Activated CD4-positive, alpha-beta memory T cell treated with anti-CD3 and anti-CD28 coated beads for 36 hours (primary cell): ENCODE measurements at regions of chr9 and their contacts with region 1.

Region 1: GRCh38 chr9:73149371-73150067 is 2.1 kb upstream of the ANXA1 start:
- DNase-seq: no peak
- H3K4me3 Mint-ChIP-seq: peak overlapping the region; percentile 55
- H3K27ac Mint-ChIP-seq: peak overlapping the region; percentile 86
- H3K4me1 Mint-ChIP-seq: peaks cover 66% of the 10 kb centered on the region
- H3K27me3 Mint-ChIP-seq: no peaks in the 10 kb centered on the region

Region 2: DNA sequence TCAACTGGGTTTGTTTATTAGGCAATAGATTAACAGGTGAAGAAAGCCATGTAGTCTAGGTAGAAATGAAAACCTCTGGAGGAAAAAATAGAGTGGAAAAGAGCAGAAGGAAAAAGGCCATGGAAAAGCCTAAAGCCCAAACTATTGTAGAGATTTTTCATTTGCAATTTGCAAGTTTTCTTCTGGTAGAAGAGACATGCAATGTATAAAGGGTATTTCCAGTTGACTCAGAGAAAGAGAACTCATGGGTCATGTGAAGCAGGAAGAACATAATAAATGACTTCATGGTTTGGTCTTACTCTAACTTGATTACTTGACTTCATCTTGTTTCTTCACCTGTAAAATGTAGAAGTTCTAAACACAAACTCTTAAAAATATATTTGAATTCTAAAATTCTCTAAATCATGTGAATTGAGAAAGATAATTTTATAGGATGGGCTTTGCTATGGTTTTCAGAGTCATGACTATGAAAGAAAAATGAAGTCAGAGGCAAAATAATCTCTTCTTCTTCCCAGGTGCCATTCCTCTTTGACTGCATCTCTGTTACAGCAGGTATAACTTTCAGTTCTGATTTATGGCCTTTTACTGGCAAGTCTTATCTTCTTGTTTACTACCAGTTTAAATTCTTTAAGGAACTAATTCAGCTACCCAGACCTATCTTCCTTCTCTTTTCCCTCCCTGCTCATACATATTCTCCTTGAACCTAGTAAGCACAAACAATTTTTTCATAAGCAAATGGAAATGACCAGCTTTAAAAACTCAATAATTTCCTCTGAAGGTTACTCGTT is 675.9 kb before region 1 on chr9:
- CTCF ChIA-PET with region 1: no interaction called
- POLR2A ChIA-PET with region 1: no interaction called
- intact Hi-C with region 1: loop called (anchors 10 kb)
- DNase-seq: no peak
- H3K4me3 Mint-ChIP-seq: no peak overlapping the region
- H3K27ac Mint-ChIP-seq: peak overlapping the region; percentile 79
- H3K4me1 Mint-ChIP-seq: peaks cover 41% of the 10 kb centered on the region
- H3K27me3 Mint-ChIP-seq: no peaks in the 10 kb centered on the region

Region 3: GRCh38 chr9:72586388-72587130 is 563.0 kb before region 1 on chr9:
- CTCF ChIA-PET with region 1: no interaction called
- POLR2A ChIA-PET with region 1: no interaction called
- intact Hi-C with region 1: loop called (anchors 10 kb)
- DNase-seq: peak; percentile 44
- H3K4me3 Mint-ChIP-seq: no peak overlapping the region
- H3K27ac Mint-ChIP-seq: peak overlapping the region; percentile 50
- H3K4me1 Mint-ChIP-seq: peaks cover 47% of the 10 kb centered on the region
- H3K27me3 Mint-ChIP-seq: no peaks in the 10 kb centered on the region

Region 4: GRCh38 chr9:72871685-72872084 is 277.8 kb before region 1 on chr9:
- CTCF ChIA-PET with region 1: no interaction called
- POLR2A ChIA-PET with region 1: no interaction called
- intact Hi-C with region 1: no loop called
- DNase-seq: no peak
- H3K4me3 Mint-ChIP-seq: no peak overlapping the region
- H3K27ac Mint-ChIP-seq: no peak overlapping the region
- H3K4me1 Mint-ChIP-seq: no peaks in the 10 kb centered on the region
- H3K27me3 Mint-ChIP-seq: peaks cover 6% of the 10 kb centered on the region

Region 5: GRCh38 chr9:73116031-73116430 is 33.5 kb before region 1 on chr9:
- CTCF ChIA-PET with region 1: interaction called, 3 read pairs
- POLR2A ChIA-PET with region 1: interaction called, 7 read pairs
- intact Hi-C with region 1: loop called (anchors 1 kb)
- DNase-seq: no peak
- H3K4me3 Mint-ChIP-seq: no peak overlapping the region
- H3K27ac Mint-ChIP-seq: no peak overlapping the region
- H3K4me1 Mint-ChIP-seq: peaks cover 42% of the 10 kb centered on the region
- H3K27me3 Mint-ChIP-seq: no peaks in the 10 kb centered on the region

Region 6: DNA sequence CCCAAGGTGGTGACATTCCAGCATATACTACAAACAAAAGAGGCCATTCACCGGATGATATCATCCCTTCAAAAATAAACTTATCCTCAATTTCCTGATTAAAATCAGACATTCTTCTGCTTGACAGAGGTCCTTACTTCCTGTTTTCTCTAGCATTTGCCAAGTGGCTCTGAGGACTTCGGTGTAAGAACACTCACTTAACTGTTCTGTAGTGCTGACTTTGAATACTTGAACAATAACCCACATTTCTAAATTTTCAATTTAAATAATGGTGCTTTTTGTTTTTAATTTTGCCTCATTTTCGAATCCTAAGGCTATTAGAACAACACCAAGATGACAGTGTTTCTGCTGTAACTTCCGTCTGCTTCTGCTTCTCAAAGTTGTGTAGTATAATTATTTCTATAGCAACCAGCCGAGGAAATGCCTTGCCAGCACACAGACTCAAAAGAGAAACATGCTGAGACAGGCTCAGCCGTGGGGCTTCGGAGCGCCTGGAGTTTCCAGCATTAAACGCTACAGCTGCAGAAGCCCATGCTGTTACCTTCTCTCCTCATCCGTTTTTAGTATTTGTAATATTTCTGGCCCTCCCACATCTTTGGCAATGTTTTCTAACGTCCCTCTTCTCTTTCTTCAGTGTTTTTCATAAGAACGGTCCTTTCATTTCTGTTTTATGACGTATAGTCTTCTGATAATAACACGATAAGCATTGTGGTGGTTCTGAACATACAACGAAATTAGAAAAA is 17.3 kb before region 1 on chr9:
- CTCF ChIA-PET with region 1: interaction called, 3 read pairs
- POLR2A ChIA-PET with region 1: interaction called, 7 read pairs
- intact Hi-C with region 1: loop called (anchors 1 kb)
- DNase-seq: peak; percentile 80
- H3K4me3 Mint-ChIP-seq: peak overlapping the region; percentile 78
- H3K27ac Mint-ChIP-seq: peak overlapping the region; percentile 88
- H3K4me1 Mint-ChIP-seq: peaks cover 35% of the 10 kb centered on the region
- H3K27me3 Mint-ChIP-seq: no peaks in the 10 kb centered on the region

Region 7: DNA sequence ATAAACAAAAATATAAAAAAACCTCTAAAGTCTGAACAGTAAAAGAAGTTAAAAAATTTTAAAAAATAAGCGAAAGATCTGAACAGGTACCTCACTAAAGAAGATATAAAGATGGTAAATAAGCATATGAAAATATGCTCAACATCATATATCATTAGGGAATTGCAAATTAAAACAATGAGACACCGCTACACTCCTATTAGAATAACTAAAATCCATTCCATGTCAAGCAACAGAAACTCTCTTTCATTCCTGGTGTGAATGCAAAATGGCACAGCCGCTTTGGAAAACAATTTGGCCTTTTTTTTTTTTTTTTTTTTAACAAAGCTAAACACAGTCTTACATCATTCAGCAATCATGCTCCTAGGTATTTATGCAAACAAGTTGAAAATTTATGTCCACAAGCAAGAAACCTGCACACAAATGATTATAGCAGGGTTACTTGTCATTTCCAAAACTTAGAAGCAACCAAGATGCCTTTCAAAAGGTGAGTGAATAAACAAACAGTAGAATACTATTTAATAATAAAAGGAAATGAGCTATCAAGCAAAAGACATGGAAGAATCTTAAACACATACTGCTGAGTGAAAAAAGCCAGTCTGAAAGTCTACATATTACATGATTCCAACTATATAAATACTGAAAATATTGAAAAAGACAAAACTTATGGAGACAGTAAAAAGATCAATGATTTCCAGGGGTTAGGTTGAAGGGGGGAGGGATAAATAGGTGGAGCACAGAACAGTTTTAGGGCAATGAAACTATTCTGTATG is 24.2 kb after region 1 on chr9:
- CTCF ChIA-PET with region 1: no interaction called
- POLR2A ChIA-PET with region 1: no interaction called
- intact Hi-C with region 1: loop called (anchors 1 kb)
- DNase-seq: no peak
- H3K4me3 Mint-ChIP-seq: no peak overlapping the region
- H3K27ac Mint-ChIP-seq: no peak overlapping the region
- H3K4me1 Mint-ChIP-seq: peaks cover 12% of the 10 kb centered on the region
- H3K27me3 Mint-ChIP-seq: no peaks in the 10 kb centered on the region

Region 8: GRCh38 chr9:75148561-75148960 is 1999.0 kb after region 1 on chr9:
- CTCF ChIA-PET with region 1: no interaction called
- POLR2A ChIA-PET with region 1: no interaction called
- intact Hi-C with region 1: loop called (anchors 5 kb)
- DNase-seq: peak; percentile 41
- H3K4me3 Mint-ChIP-seq: no peak overlapping the region
- H3K27ac Mint-ChIP-seq: peak overlapping the region; percentile 82
- H3K4me1 Mint-ChIP-seq: peaks cover 69% of the 10 kb centered on the region
- H3K27me3 Mint-ChIP-seq: no peaks in the 10 kb centered on the region